Posterior vena cava (tissue), 2 donors: ENCODE measurements at regions of chr22 and their contacts with region 1.

Region 1: DNA sequence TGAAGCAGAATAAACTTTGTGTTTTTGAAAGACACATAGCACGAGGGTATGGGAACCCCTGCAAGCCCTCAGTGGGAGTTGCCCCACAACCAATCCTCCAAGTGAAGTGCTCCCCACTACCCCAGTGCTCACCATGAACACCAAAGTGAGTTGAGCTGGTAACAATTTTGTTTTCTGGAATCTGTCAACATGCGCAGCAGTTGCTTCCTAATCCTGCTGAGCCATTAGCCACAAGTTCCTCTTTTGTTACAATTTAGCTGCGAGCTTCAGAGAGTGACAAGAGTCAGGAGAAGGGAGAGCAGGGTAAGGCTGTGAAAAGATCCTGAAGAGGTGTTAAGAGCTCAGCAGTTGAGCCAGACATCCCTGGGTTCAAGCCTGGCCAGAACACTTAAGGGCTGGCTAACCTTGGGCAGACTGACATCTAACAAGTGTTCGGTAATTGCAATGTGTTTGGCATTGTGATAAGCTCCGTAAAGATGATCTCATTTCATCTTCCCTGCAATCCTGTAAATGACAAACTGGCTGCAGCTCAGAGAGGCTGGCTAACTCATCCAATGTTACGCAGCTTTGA is 24.1 kb upstream of the ASPHD2 start:
- DNase-seq: no peak

Region 2: DNA sequence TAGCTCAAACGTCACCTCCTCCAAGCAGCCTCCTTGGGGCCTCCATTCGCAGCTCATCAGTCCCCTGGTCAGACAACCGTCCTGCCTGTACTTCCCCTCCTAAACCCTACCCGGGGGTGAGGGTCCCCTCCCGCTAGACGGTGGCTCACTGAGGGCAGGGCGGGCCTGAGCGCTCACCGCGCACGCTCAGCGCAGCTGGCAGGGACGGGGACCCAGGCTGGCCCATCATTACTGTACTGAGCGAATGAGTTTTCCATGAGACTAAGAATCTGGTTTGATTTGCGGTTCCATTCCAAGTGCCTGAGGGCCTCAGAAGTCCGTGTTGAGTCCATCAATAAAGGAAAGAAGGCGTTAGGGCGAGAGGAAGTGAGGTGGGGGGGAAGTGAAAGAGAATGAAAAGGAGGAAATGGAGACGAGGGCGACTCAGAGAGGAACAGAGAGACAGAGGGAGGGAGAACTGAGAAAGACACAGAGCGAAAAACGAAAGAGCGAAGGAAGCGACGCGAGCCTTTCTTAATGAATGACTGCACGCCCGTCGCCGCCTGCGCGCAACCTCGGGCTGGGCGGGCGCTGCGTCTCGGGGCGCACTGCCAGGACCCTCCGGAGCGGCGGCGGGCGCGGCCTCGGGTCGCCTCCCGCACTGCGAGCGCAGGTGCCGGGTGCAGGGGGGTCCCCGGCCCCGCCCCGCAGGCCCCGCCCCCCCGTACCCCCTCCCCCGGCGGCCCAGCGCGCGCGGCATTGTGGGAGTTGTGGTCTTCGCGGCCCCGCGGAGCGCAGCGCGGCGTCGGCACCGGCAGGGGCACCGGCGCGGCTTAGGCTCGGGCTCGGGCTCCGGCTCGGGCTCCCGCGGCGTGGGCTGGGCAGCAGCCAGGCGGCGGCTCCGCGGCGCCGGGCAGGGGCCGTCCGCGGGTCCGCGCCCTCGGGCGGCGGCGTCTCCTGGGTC is 23.9 kb after region 1 on chr22 and contains the start of gene ASPHD2:
- intact Hi-C with region 1: no loop called
- DNase-seq: peak; percentile 89
- total RNA-seq, gene ASPHD2: 0.56 to 0.67 TPM

Region 3: DNA sequence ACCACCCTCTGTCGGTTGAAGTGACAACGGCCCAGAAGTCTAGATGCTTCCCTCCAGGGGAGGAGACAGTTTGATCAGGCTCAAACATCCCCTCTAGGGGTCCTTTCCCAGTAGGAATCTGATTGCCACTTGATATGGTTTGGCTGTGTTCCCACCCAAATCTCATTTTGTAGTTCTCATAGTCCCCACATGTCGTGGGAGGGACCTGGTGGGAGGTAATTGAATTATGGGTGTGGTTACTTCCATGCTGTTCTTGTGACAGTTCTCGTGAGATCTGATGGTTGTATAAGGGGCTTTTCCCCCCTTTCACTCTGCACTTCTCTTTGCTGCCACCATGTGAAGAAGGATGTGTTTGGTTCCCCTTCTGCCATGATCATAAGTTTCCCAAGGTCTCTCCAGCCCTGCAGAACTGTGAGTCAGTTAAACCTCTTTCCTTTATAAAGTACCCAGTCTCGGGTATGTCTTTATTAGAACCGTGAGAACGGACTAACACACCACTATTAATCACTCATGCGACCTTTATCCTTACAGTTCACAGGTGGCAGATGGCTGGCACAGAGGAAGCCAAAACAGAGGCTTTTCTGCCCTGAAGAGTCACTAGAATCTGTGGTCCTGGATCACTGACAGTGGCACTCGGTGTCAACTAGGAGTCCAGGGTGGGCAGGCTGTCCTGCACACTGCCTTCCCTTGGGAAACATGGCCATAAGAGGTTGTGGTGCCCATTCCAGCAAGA is 45.7 kb after region 1 on chr22:
- intact Hi-C with region 1: loop called in 1 of 2 experiments (anchors 10 kb)
- DNase-seq: no peak